Caco-2 (cell line): ENCODE measurements at regions of chr15 and their contacts with region 1.

Region 1: DNA sequence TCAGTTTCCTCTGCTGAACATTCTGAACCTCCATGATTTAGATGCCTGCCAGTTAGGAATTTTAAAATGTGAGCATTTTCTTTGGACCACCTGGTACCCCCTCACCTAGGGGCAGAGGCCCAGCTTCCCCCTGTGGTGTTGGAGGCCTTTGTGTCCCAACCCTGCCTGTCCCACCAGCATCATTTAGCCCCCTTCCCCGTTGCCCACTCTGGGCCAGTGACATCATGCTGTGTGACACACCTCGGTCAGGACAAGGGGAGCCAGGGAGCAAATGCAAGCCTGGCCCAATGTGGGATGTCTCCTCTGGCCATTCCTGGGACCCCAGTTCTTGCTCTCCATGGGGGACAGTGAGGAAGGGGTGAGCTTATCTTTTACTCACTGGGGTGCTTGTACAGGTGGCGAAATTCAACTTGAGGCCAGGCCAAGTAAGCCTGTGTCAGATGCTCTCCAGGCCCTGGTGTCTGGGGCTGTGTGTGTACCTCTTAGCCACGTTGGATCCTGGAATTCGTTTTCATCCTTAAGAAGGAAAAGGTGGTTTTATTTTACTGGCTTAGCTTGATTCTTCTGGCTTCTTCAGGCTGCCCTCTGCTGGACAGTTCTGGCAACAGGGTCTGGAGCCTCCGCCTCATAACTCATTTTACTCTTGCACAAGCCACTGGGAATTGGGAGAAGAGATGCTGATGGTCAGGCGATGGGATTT is 49.7 kb upstream of the MYZAP start:
- DNase-seq: peak; percentile 74 to 80
- H3K4me3 ChIP-seq: no peak overlapping the region
- H3K4me3 Mint-ChIP-seq: no peak overlapping the region
- H3K27ac Mint-ChIP-seq: no peak overlapping the region
- H3K4me1 ChIP-seq: 0 out of 2 replicates have a peak, but pooled peaks cover 3% of the 10 kb centered on the region
- H3K4me1 Mint-ChIP-seq: peaks cover 6% of the 10 kb centered on the region
- H3K27me3 ChIP-seq: no peaks in the 10 kb centered on the region
- H3K27me3 Mint-ChIP-seq: no peaks in the 10 kb centered on the region
- CTCF ChIP-seq: peak; percentile 76 to 84

Region 2: DNA sequence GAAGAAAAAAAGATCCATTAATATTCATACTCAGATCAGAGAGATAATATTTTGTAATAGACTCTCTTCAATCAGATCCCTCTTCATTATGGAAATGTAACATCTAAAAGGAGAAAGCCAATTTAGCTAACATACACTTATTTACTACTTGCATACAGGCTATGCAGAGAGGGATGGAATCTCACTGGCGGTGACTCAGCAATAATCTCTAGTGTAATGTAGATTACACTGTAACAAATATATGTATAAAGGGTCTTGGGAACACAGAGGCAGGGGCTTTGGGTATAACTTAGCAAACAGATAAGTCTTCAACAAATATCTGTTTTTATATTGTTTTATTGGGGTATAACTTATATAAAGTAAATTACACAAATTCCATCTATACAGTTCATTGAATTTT is 96.1 kb before region 1 on chr15:
- CTCF ChIA-PET with region 1: no interaction called
- POLR2A ChIA-PET with region 1: no interaction called
- intact Hi-C with region 1: no loop called
- DNase-seq: no peak
- H3K4me3 ChIP-seq: no peak overlapping the region
- H3K4me3 Mint-ChIP-seq: no peak overlapping the region
- H3K27ac Mint-ChIP-seq: peak overlapping the region; percentile 13
- H3K4me1 ChIP-seq: peaks cover 13% of the 10 kb centered on the region
- H3K4me1 Mint-ChIP-seq: peaks cover 24% of the 10 kb centered on the region
- H3K27me3 ChIP-seq: no peaks in the 10 kb centered on the region
- H3K27me3 Mint-ChIP-seq: no peaks in the 10 kb centered on the region
- CTCF ChIP-seq: no peak

Region 3: GRCh38 chr15:57476533-57476975 is 65.4 kb before region 1 on chr15:
- CTCF ChIA-PET with region 1: no interaction called
- POLR2A ChIA-PET with region 1: no interaction called
- intact Hi-C with region 1: no loop called
- DNase-seq: no peak
- H3K4me3 ChIP-seq: no peak overlapping the region
- H3K4me3 Mint-ChIP-seq: no peak overlapping the region
- H3K27ac Mint-ChIP-seq: no peak overlapping the region
- H3K4me1 ChIP-seq: peaks cover 28% of the 10 kb centered on the region
- H3K4me1 Mint-ChIP-seq: peaks cover 29% of the 10 kb centered on the region
- H3K27me3 ChIP-seq: no peaks in the 10 kb centered on the region
- H3K27me3 Mint-ChIP-seq: no peaks in the 10 kb centered on the region
- CTCF ChIP-seq: no peak

Region 4: GRCh38 chr15:57551717-57552677 is 10.0 kb after region 1 on chr15:
- CTCF ChIA-PET with region 1: interaction called, 20 read pairs
- POLR2A ChIA-PET with region 1: no interaction called
- intact Hi-C with region 1: no loop called
- DNase-seq: peak; percentile 84 to 92
- H3K4me3 ChIP-seq: peak overlapping the region; percentile 8; the same call in 1 of the 2 replicates
- H3K4me3 Mint-ChIP-seq: peak overlapping the region; percentile 64
- H3K27ac Mint-ChIP-seq: peak overlapping the region; percentile 92
- H3K4me1 ChIP-seq: peaks cover 74% of the 10 kb centered on the region
- H3K4me1 Mint-ChIP-seq: peaks cover 53% of the 10 kb centered on the region
- H3K27me3 ChIP-seq: no peaks in the 10 kb centered on the region
- H3K27me3 Mint-ChIP-seq: no peaks in the 10 kb centered on the region
- CTCF ChIP-seq: no peak